WTC11 (cell line): ENCODE measurements at regions of chr19 and their contacts with region 1.

Region 1: GRCh38 chr19:40603389-40604135 is 2.4 kb downstream of the LTBP4 start:
- DNase-seq: peak; percentile 100
- ATAC-seq: peak; percentile 79
- H3K4me3 Mint-ChIP-seq: peak overlapping the region; percentile 77
- H3K27ac Mint-ChIP-seq: peak overlapping the region; percentile 78
- H3K4me1 Mint-ChIP-seq: peaks cover 52% of the 10 kb centered on the region
- H3K27me3 Mint-ChIP-seq: peaks cover 90% of the 10 kb centered on the region
- CTCF ChIP-seq: no peak

Region 2: DNA sequence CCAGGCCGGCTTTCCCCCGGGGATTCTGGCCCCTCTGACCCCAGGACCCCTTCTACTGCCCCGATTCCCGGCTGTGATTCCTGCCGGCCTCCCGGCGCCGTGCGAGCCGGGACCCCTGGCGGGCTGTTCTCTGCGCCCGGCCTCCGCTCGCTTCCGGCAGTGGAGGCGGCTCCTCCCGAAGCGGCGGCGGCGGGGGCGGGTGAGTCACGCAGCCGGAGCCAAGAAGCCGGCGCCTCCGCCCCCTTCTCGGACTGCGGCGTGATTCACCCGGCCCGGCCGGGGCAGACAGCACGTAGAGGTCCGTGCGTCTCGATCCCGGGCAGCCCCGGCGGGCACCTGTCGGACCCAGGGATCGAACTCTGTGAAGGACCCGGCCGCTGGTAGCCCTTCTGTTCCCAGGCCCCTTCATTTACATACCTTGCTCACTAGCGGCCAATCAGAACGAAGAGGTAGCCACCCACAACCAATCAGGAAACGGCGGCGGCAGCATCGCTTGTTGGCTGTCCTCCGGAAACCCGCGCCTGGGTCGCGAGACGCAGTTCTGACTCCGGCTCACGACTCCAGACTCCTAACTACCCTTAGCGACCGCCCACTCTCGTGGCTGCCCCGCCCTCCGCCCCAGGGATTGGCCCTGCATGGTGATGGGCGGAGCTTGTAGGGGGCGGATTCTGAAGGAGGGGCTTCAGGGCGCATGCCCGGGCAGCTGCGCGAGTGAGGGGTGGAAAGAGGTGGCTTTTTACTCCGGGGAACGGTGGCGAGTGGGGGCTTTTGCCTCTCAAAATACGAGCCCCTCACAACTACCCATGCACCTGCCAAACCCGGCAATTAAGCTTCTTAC is 177.9 kb before region 1 on chr19 and contains the start of gene SERTAD1:
- CTCF ChIA-PET with region 1: interaction called, 13 read pairs
- POLR2A ChIA-PET with region 1: no interaction called
- DNase-seq: peak; percentile 100
- ATAC-seq: peak; percentile 89
- H3K4me3 Mint-ChIP-seq: peak within 1 kb of the TSS; percentile 91
- H3K27ac Mint-ChIP-seq: peak within 1 kb of the TSS; percentile 97
- H3K4me1 Mint-ChIP-seq: peaks cover 16% of the 10 kb centered on the region
- H3K27me3 Mint-ChIP-seq: peaks cover 3% of the 10 kb centered on the region; the same call in 1 of the 2 replicates
- CTCF ChIP-seq: peak; percentile 80
- total RNA-seq, gene SERTAD1: 6.8 to 8.6 TPM (median 7.4 TPM) in 3 replicates

Region 3: GRCh38 chr19:40489882-40490230 is 113.7 kb before region 1 on chr19:
- CTCF ChIA-PET with region 1: interaction called, 13 read pairs
- POLR2A ChIA-PET with region 1: no interaction called
- DNase-seq: no peak
- ATAC-seq: no peak
- H3K4me3 Mint-ChIP-seq: no peak overlapping the region
- H3K27ac Mint-ChIP-seq: no peak overlapping the region
- H3K4me1 Mint-ChIP-seq: peaks cover 5% of the 10 kb centered on the region
- H3K27me3 Mint-ChIP-seq: peaks cover 67% of the 10 kb centered on the region
- CTCF ChIP-seq: no peak

Region 4: GRCh38 chr19:40529093-40529954 is 74.2 kb before region 1 on chr19:
- CTCF ChIA-PET with region 1: interaction called, 25 read pairs
- POLR2A ChIA-PET with region 1: no interaction called
- DNase-seq: peak; percentile 93
- ATAC-seq: peak; percentile 57
- H3K4me3 Mint-ChIP-seq: peak overlapping the region; percentile 67
- H3K27ac Mint-ChIP-seq: peak overlapping the region; percentile 68; the same call in 1 of the 2 replicates
- H3K4me1 Mint-ChIP-seq: peaks cover 16% of the 10 kb centered on the region
- H3K27me3 Mint-ChIP-seq: peaks cover 41% of the 10 kb centered on the region
- CTCF ChIP-seq: peak; percentile 99

Region 5: GRCh38 chr19:40549007-40549708 is 54.4 kb before region 1 on chr19:
- CTCF ChIA-PET with region 1: interaction called, 71 read pairs
- POLR2A ChIA-PET with region 1: interaction called, 4 read pairs
- DNase-seq: peak; percentile 96
- ATAC-seq: peak; percentile 93
- H3K4me3 Mint-ChIP-seq: peak overlapping the region; percentile 61
- H3K27ac Mint-ChIP-seq: no peak overlapping the region
- H3K4me1 Mint-ChIP-seq: peaks cover 8% of the 10 kb centered on the region
- H3K27me3 Mint-ChIP-seq: peaks cover 78% of the 10 kb centered on the region
- CTCF ChIP-seq: peak; percentile 41; the same call in 1 of the 2 replicates

Region 6: GRCh38 chr19:40570313-40571004 is 33.1 kb before region 1 on chr19:
- CTCF ChIA-PET with region 1: interaction called, 69 read pairs
- POLR2A ChIA-PET with region 1: interaction called, 3 read pairs
- DNase-seq: peak; percentile 100
- ATAC-seq: peak; percentile 96
- H3K4me3 Mint-ChIP-seq: peak overlapping the region; percentile 75
- H3K27ac Mint-ChIP-seq: no peak overlapping the region; the same call in 1 of the 2 replicates
- H3K4me1 Mint-ChIP-seq: peaks cover 15% of the 10 kb centered on the region
- H3K27me3 Mint-ChIP-seq: peaks cover 78% of the 10 kb centered on the region
- CTCF ChIP-seq: no peak

Region 7: DNA sequence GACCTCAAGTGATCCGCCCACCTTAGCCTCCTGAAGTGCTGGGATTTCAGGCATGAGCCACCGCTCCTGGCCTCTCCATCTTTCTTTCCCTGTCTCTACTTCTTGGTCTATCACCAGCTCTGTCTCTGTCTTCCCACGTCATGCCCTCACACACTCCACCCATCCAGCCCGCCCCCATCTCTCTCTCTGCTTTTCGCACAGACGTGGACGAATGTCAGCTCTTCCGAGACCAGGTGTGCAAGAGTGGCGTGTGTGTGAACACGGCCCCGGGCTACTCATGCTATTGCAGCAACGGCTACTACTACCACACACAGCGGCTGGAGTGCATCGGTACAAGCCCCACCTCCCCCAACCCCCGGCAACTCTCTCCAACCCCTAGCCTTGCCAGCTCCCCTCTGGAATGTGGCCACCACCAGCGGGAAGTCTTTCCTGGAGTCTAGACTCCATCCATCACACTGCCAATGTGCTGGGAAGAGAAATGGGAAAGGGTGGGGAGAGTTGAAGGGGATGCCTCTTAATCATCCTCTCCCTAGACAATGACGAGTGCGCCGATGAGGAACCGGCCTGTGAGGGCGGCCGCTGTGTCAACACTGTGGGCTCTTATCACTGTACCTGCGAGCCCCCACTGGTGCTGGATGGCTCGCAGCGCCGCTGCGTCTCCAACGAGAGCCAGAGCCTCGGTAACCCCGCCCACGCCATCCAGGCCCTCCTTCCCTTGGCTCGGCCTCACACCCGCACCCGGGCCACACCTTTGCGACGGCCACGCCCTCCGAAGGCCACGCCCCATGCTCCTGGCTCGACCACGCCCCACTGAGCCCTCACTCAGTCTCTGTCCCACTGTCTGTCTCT is 20.1 kb after region 1 on chr19:
- CTCF ChIA-PET with region 1: interaction called, 32 read pairs
- POLR2A ChIA-PET with region 1: interaction called, 5 read pairs
- DNase-seq: peak; percentile 98
- ATAC-seq: peak; percentile 92
- H3K4me3 Mint-ChIP-seq: peak overlapping the region; percentile 55
- H3K27ac Mint-ChIP-seq: peak overlapping the region; percentile 93
- H3K4me1 Mint-ChIP-seq: peaks cover 19% of the 10 kb centered on the region
- H3K27me3 Mint-ChIP-seq: no peaks in the 10 kb centered on the region; the same call in 1 of the 2 replicates
- CTCF ChIP-seq: no peak

Region 8: DNA sequence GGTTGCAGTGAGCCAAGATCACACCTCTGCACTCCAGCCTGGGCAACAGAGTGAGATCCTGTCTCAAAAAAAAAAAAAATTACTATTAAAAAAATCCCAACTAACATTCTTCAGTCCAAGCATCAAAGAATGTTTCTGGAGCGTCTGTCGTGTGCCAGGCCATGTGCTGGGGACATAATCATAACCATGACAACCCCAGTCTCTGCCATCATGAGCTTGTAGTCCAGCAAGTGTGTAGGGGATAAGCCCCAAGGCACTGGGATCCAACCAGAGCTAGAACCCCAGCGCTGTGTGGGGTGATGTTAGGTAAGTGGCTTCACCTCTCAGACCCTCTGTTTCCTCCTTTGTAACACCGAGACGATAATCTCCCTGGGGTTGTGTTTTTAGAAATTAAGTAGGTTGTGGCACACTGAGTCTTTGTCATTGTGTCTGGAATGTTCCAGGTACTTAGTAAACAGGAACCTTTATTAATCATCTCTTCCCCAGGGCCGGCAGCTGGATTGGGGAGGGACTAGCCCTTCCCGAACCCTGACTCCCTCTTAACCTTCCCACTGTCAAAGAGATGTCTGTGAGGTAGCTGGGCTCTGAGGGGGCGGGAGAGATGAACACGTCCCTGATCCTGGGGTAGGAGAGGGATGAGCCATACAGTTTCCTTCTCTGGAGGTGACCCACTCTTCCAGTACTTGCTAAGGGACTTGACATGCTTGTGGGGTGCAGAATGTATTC is 118.5 kb after region 1 on chr19:
- CTCF ChIA-PET with region 1: no interaction called
- POLR2A ChIA-PET with region 1: no interaction called
- DNase-seq: no peak
- ATAC-seq: no peak
- H3K4me3 Mint-ChIP-seq: no peak overlapping the region
- H3K27ac Mint-ChIP-seq: no peak overlapping the region
- H3K4me1 Mint-ChIP-seq: peaks cover 22% of the 10 kb centered on the region
- H3K27me3 Mint-ChIP-seq: no peaks in the 10 kb centered on the region
- CTCF ChIP-seq: no peak